Dendritic cell treated with granulocyte-macrophage colony-stimulating factor and Interleukin-4, amounts not matched to agents 40 ng/mL and 50 ng/mL, for 4 days (primary cell): ENCODE measurements at regions of chr7 and their contacts with region 1.

Region 1: DNA sequence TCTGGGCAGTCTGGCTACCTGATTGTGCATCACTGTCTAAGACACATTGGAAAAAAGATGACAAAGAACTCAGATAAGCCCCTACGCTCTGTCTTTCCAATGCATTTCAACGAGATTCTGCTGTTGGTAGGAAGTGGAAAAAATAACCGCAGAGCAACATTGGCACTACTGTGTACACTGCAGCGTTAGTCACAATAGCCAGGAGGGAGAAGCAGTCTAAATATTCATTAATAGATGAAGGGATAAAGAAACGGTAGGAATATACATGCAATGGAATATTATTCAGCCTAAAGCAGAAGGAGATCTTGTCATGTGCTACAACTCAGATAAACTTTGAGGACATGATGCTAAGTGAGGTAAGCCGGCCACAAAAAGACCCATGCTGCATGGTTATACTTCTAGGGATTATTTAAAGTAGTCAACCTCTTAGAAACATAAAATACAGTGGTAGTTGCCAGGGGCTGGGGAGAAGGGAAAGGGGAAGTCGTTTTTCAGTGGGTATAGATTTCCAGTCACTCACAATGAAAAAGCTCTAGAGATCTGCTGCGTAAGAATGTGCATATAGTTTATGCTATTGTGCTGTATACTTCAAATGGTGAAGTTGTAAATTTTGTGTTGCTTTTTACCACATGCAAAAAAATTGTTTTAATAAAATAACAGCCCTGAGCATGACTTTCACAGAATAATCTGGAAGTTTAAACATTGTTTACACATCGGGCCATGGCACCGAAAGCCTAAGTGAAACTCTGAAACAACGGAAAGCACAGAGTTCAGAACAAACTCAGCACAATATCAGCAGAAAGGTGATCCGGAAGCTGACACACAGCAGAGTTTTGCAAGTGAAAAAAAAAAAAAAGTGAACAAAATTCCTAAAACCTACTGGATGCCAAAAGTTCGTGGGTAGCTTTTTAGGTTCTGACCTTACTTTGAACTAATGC is 40.1 kb downstream of the ELMO1 start:
- H3K4me3 Mint-ChIP-seq: peak overlapping the region; percentile 62
- H3K27ac Mint-ChIP-seq: peak overlapping the region; percentile 84
- H3K4me1 Mint-ChIP-seq: peaks cover 84% of the 10 kb centered on the region
- H3K27me3 Mint-ChIP-seq: no peaks in the 10 kb centered on the region

Region 2: DNA sequence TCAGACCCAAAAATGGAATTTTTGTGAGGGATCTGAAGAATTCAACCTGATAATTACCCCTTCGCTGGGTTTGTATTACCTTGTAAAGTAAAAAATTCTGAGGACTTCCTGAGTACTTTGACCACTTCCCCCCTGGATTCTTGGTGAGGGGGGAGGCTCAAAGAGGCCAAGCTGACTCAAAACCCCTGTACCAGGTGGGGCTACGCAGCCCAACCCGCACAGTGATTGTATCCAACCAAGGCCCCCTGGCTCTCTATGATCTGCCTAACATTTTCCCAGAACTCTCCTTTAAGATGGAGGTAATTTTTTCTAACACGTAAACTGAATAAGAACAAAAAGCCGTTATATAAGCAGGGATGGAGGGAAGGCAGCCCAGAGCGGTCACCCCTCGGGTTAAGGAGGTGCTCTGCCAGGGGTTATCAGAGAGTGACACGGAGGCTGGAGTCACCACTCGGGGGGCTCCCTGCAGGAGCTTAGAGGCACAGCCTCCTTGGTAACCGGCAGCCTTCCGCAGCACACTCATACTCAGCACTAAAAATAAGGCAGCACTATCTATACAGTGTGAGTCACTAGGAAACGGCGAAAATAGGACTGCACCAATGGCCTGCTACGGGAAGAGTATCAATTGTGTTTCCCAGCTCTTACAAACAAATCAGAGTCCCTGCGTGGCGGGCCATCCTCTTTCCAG is 215.3 kb before region 1 on chr7:
- intact Hi-C with region 1: no loop called
- H3K4me3 Mint-ChIP-seq: no peak overlapping the region
- H3K27ac Mint-ChIP-seq: no peak overlapping the region
- H3K4me1 Mint-ChIP-seq: no peaks in the 10 kb centered on the region
- H3K27me3 Mint-ChIP-seq: no peaks in the 10 kb centered on the region

Region 3: DNA sequence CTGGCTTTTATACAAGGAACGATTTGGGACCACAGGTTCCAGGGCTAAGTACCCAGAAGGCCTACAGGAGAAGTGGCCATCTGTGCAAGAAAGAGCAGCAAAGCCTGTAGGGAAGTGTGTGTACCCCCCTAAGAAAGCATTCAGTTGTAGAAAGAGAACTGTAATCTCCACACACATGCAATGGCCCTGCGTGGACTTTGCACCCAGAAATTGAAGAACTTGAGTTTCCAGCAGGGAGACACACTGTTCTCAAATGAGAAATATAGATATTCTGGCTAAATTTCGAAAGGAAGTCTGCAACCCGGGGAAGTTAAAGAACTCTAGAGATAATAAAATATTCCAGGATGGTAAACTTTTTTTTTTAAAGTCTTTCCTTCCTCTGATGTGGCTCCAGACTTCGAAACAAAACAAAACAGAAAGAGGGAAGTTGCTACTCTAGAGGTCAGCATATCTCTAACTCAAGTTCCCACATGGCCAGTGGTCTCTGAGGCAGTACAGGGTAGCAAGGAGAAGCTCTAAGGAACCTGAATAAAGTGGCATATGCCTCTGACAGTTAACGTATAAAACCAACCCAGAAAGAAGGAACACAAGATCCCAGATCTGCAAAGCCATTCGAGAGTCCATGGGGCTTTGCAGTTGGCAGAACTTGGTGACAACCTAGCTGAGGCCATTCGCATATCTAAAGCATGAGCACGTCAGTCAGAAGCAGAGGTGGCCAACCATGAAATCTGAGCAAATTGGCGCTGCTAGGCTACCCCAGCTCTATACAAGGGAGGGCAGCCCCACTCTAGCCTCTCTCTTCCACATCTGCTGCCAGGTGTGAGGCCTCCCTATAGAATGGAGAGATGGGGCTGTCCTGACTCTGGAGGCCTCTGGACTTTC is 16.5 kb before region 1 on chr7:
- intact Hi-C with region 1: loop called (anchors 2 kb)
- H3K4me3 Mint-ChIP-seq: peak overlapping the region; percentile 57
- H3K27ac Mint-ChIP-seq: peak overlapping the region; percentile 89
- H3K4me1 Mint-ChIP-seq: peaks cover 81% of the 10 kb centered on the region
- H3K27me3 Mint-ChIP-seq: no peaks in the 10 kb centered on the region